Activated CD4-positive, alpha-beta T cell treated with anti-CD3 and anti-CD28 coated beads for 36 hours (primary cell): ENCODE measurements at regions of chr1 and their contacts with region 1.

Region 1: GRCh38 chr1:224329842-224330753 is at the start of gene NVL:
- DNase-seq: peak; percentile 89
- ATAC-seq: peak; percentile 81
- H3K4me3 Mint-ChIP-seq: peak within 1 kb of the TSS; percentile 88
- H3K27ac Mint-ChIP-seq: peak within 1 kb of the TSS; percentile 92
- H3K4me1 Mint-ChIP-seq: peaks cover 36% of the 10 kb centered on the region
- H3K27me3 Mint-ChIP-seq: no peaks in the 10 kb centered on the region
- total RNA-seq, gene NVL: 34.2 to 44.1 TPM

Region 2: DNA sequence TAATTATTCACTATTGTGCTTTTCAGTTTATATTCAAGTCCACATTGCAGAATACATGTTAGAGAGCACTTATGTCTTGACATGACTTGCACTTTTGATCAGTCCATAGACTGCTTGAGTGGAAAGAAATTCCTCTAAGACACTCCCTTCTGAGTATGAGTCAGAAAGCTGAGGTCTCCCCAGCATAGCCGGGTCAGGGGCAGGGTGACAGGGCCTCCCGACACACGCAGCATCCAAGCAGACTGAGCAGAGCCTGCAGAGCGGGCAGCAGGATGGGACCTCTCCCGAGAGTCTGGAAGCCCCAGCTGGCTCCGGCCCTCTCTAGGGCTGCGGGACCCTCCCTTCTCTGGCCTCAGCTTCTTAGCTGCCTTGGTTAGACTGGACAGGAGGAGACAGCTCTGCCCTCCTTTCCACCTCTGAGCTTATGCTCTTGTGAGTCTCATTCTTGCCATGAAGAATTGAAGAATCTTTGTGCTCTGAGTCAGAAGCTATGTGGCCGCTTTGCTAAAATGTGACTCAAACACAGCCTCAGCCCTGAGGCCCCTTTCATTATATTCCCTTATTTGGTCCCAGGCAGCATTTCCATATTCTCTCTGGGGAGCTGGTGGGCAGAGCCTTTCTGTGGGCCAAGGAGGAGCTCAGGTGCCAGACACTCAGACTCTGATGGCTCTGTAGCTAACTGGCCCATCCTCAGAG is 629.0 kb before region 1 on chr1:
- CTCF ChIA-PET with region 1: interaction called, 3 read pairs
- POLR2A ChIA-PET with region 1: no interaction called
- intact Hi-C with region 1: loop called (anchors 1 to 10 kb)
- DNase-seq: peak; percentile 59
- ATAC-seq: peak; percentile 75
- H3K4me3 Mint-ChIP-seq: no peak overlapping the region
- H3K27ac Mint-ChIP-seq: peak overlapping the region; percentile 55
- H3K4me1 Mint-ChIP-seq: peaks cover 34% of the 10 kb centered on the region
- H3K27me3 Mint-ChIP-seq: peaks cover 4% of the 10 kb centered on the region

Region 3: GRCh38 chr1:224132901-224133300 is 197.2 kb before region 1 on chr1:
- CTCF ChIA-PET with region 1: no interaction called
- POLR2A ChIA-PET with region 1: no interaction called
- intact Hi-C with region 1: no loop called
- DNase-seq: no peak
- ATAC-seq: no peak
- H3K4me3 Mint-ChIP-seq: no peak overlapping the region
- H3K27ac Mint-ChIP-seq: no peak overlapping the region
- H3K4me1 Mint-ChIP-seq: no peaks in the 10 kb centered on the region
- H3K27me3 Mint-ChIP-seq: no peaks in the 10 kb centered on the region

Region 4: GRCh38 chr1:224168859-224169380 is 161.2 kb before region 1 on chr1:
- CTCF ChIA-PET with region 1: interaction called, 5 read pairs
- POLR2A ChIA-PET with region 1: no interaction called
- intact Hi-C with region 1: loop called in 1 of 2 experiments (anchors 1 kb)
- DNase-seq: peak; percentile 29
- ATAC-seq: peak; percentile 96
- H3K4me3 Mint-ChIP-seq: peak overlapping the region; percentile 14
- H3K27ac Mint-ChIP-seq: peak overlapping the region; percentile 55
- H3K4me1 Mint-ChIP-seq: peaks cover 36% of the 10 kb centered on the region
- H3K27me3 Mint-ChIP-seq: no peaks in the 10 kb centered on the region

Region 5: DNA sequence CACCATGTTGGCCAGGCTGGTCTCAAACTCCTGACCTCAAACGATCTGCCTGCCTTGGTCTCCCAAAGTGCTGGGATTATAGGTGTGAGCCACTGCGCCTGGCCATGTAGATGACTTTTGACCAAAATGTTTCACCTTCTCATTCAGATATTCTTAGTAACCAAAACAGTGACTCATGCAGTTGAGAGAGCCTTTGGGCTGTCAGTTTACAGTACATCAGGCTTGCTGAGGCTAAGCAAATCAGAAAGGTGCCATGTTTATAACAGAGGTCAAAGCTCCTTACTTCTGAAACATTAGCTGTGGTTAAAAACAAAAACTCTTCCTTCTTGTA is 47.5 kb after region 1 on chr1:
- CTCF ChIA-PET with region 1: interaction called, 4 read pairs
- POLR2A ChIA-PET with region 1: interaction called, 4 read pairs
- intact Hi-C with region 1: loop called in 1 of 2 experiments (anchors 2 kb)
- DNase-seq: peak; percentile 56
- ATAC-seq: peak; percentile 68
- H3K4me3 Mint-ChIP-seq: no peak overlapping the region
- H3K27ac Mint-ChIP-seq: peak overlapping the region; percentile 82
- H3K4me1 Mint-ChIP-seq: peaks cover 94% of the 10 kb centered on the region
- H3K27me3 Mint-ChIP-seq: no peaks in the 10 kb centered on the region

Region 6: DNA sequence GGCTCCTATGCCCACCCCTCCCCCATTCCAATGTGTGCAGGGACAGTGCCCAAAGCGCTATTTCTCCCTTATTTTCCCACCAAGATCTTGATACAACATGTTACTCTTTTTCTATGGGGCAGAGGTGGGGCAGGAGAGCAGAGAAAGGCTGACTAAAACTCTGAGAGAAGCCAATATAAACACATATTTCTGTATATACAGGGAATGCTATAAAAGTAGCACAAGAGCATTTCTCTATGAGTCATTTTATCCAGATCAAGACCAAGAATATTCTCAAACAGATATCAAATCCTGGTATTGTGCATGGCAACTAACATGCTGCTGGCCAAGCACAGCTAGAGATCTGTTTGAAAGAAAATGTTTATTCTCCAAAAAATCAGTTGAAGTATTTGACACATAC is 97.2 kb after region 1 on chr1:
- CTCF ChIA-PET with region 1: no interaction called
- POLR2A ChIA-PET with region 1: no interaction called
- intact Hi-C with region 1: no loop called
- DNase-seq: no peak
- ATAC-seq: no peak
- H3K4me3 Mint-ChIP-seq: no peak overlapping the region
- H3K27ac Mint-ChIP-seq: no peak overlapping the region
- H3K4me1 Mint-ChIP-seq: peaks cover 54% of the 10 kb centered on the region
- H3K27me3 Mint-ChIP-seq: no peaks in the 10 kb centered on the region